ENCODE measurements at regions of chr4 and their contacts with region 1.

Region 1: GRCh38 chr4:48963042-48963679 is 22.9 kb upstream of the CWH43 start:
- DNase-seq: peak; percentile 17 to 90 (median 76)

Region 2: DNA sequence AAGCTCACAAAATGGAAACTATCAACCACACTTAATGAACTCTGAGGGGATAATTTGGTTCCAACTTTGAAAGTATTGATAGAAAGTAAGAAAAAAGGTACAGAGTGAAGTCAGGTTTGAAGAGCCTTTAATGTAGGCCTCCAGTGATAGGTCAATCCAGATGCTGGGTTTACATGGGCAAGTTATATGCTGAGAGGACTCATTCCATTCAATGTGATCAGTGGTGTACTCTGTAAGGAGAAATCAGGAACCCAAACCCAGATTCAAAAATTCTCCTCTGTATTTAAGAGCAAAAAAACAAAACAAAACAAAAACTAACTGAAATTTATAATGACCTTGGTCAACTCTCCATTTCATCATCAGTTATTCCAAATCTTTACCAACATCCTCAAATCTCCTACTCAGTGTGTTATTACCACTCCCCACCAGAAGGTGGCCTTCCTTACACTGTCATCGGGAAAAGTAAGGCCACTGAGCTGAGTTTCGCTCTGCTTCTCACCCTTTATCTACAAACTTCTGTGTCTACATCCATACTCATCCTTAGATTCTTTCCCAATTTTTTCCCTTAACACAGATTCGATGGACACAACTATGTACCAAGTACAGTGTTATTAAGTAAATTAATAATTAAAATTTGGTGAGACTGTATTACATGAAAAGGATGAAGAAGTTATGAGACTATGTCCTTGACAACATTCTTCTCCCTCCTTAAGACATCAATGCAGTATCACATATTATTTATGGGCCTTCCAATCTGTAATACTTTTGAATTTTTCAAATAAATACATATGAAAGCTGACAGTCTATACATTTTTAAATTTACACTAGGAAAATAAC is 384.8 kb before region 1 on chr4:
- intact Hi-C with region 1: loop called (anchors 5 kb)
- DNase-seq: peak in 37 of 42 donors; percentile 33 to 91 (median 71)

Measured in head of caudate nucleus (tissue), 42 donors.